ENCODE measurements at regions of chr1 and their contacts with region 1.

Region 1: DNA sequence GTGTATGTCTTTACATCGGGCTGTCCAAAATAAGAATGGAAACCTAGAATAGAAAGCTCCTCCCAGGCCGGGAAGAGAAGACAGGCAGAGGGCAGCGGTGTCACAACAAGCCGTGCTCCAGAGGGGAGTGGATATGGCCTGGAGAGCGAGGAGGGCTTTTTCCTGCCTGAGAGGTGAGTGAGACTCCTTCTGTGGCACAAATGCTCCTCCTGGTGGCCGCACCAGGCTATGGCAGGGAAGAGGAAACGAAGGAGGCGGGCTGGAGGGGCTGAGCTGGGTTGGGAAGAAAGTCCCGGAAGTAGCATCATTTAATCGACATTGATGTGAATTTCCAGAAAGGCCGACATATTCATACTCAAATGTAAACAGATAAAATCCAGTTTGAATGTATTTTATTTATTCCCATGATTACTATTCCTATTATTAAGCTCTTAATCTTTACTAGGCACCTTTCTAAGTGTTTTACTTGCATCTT is 54.7 kb downstream of the MEF2D start:
- DNase-seq: peak; percentile 90
- ATAC-seq: peak; percentile 89
- H3K4me3 Mint-ChIP-seq: no peak overlapping the region
- H3K27ac Mint-ChIP-seq: no peak overlapping the region
- H3K4me1 Mint-ChIP-seq: peaks cover 16% of the 10 kb centered on the region
- H3K27me3 Mint-ChIP-seq: peaks cover 33% of the 10 kb centered on the region

Region 2: DNA sequence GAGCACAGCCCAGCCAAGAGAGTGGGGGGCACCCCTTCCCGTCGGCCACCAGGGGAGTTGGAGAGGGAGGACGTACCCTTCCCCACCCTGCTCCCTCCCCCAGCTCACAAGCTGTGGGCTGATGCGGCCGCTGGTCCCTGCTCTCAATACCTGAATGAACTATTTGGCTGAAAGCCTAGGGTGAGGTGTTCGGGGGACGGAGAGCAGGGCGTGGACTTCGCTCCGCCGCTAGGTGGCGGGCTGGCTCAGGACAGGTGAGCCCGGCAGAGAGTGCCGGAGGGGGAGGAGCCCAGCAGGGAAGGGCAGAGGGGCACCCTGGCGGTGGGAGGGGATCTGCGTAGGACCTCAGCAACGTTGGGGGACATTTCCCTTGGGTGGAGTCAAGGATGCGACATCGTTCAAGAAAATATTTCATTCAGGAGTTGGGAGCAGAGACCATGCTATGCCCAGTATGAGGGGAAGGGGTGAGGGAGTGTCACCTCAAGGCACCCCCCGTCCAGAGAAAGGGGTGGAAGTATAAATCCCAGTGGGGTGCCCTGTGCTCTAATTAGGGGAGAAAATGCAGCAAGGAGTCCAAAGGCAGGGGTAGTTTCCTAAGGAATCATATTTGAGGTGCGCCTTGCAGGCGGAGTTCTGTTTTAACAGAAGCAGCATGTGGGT is 88.8 kb before region 1 on chr1:
- CTCF ChIA-PET with region 1: interaction called, 19 read pairs
- POLR2A ChIA-PET with region 1: no interaction called
- intact Hi-C with region 1: no loop called
- DNase-seq: peak; percentile 87
- ATAC-seq: peak; percentile 95
- H3K4me3 Mint-ChIP-seq: no peak overlapping the region
- H3K27ac Mint-ChIP-seq: no peak overlapping the region
- H3K4me1 Mint-ChIP-seq: peaks cover 8% of the 10 kb centered on the region
- H3K27me3 Mint-ChIP-seq: peaks cover 6% of the 10 kb centered on the region

Region 3: DNA sequence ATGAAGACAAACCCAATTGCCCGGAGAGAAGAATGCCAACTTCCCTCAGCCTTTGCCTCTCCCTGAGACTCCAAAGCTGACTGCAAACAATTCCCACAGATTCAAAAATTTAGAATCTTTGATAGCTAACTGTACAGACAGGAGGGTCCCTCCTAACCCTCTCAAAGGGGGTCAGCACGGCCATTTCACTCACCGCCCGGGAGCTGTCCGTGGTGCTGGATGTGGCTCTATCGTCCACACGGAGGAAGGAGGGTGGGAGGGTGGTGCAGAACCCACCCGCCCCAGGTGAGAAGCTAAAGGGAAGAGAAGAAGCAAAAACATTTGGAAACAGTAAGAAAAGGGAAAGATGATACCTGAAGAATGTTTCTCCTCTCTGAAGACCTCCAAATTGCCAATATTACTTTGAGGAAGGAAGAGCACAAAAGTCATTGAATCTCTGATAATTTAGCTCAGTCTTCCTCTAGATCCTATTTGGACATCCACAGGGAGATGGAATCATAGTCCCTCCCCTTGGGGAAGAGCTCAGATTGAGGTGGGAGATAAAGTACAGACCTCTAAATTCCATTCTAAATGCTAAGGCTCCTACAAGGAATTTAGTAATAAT is 31.3 kb before region 1 on chr1:
- CTCF ChIA-PET with region 1: interaction called, 16 read pairs
- POLR2A ChIA-PET with region 1: no interaction called
- intact Hi-C with region 1: no loop called
- DNase-seq: peak; percentile 57
- ATAC-seq: no peak
- H3K4me3 Mint-ChIP-seq: no peak overlapping the region
- H3K27ac Mint-ChIP-seq: no peak overlapping the region
- H3K4me1 Mint-ChIP-seq: peaks cover under 1% of the 10 kb centered on the region
- H3K27me3 Mint-ChIP-seq: peaks cover 44% of the 10 kb centered on the region

Region 4: GRCh38 chr1:156524481-156524869 is 78.6 kb after region 1 on chr1:
- CTCF ChIA-PET with region 1: interaction called, 10 read pairs
- POLR2A ChIA-PET with region 1: no interaction called
- intact Hi-C with region 1: no loop called
- DNase-seq: peak; percentile 34
- ATAC-seq: peak; percentile 82
- H3K4me3 Mint-ChIP-seq: no peak overlapping the region
- H3K27ac Mint-ChIP-seq: peak overlapping the region; percentile 40
- H3K4me1 Mint-ChIP-seq: peaks cover 30% of the 10 kb centered on the region
- H3K27me3 Mint-ChIP-seq: no peaks in the 10 kb centered on the region

Measured in activated CD4-positive, alpha-beta T cell treated with anti-CD3 and anti-CD28 coated beads for 36 hours (primary cell).